Right ventricle myocardium inferior (tissue), 1 donor: ENCODE measurements at regions of chr20 and their contacts with region 1.

Region 1: DNA sequence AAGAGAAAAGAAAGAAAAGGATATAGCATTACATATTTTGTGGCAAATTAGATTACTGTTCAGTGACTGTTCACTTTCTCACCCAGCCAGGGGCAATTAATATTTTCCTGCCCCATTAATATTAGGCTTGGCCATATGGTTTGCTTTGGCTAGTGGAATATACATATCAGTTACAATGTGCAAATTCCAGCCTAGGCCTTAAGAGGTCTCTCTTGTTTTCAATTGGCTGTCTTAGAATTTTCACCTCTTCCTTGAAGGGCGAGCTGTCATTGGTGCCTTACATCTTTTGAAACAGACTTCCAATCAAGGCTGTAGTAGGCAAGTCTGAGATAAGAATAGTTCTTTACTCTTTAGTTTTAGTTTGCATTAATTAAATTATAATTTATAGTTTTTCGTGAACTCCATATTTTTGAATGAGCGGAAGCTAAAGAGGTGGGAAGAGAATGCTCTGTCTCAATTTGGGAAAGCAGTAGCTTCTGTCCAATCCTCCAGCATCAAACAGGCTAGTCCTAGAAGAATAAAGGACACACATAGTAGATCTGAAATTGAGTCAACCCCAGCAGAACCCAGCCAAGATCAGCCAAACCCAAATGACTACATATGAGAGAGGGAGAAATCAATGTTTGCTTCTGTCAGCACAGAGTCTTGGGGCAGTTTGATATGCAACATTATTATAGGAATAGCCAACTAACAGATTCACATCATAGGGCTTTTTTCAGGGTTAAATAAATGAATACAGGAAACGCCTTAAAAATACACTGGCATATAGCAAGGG is 6.3 kb upstream of the CSNK2A1 start:
- DNase-seq: no peak
- ATAC-seq: no peak

Region 2: GRCh38 chr20:504632-505075 is 45.3 kb before region 1 on chr20:
- intact Hi-C with region 1: no loop called
- DNase-seq: no peak
- ATAC-seq: no peak

Region 3: GRCh38 chr20:611843-612185 is 61.9 kb after region 1 on chr20:
- intact Hi-C with region 1: no loop called
- DNase-seq: no peak
- ATAC-seq: no peak

Region 4: DNA sequence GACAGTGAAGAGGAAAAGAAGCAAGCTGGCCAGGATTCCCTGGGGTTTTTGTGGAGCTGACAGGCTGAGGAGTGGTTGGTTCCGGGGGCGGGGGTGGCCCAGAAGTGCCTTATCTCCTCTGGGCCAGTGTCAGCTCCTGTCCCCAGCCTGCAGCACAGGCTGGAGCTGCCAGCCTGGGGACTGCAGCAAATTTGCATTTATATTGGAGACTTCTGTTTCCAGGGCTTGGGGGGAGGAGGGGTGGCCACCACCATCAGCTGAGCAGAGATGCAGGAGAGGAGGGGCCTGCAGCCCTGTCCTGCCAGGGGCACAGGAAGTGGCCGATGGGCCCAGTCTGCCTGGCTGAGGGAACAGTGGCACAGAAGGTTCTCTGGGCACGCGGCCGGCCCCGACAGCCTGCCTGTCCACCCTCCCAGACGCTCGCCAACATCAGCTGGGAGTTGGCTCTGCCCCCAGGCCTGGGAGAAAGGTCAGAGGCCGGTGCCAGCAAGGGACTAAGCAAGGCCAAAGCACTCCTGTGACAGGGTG is 150.0 kb after region 1 on chr20:
- intact Hi-C with region 1: no loop called
- DNase-seq: peak; percentile 85
- ATAC-seq: peak; percentile 95

Region 5: GRCh38 chr20:833450-834150 is 283.7 kb after region 1 on chr20 and contains the start of gene FAM110A:
- intact Hi-C with region 1: loop called (anchors 5 kb)
- DNase-seq: peak; percentile 99
- ATAC-seq: peak; percentile 97
- total RNA-seq, gene FAM110A: 2.6 TPM